Heart right ventricle (tissue), 16 donors: ENCODE measurements at regions of chr1 and their contacts with region 1.

Region 1: DNA sequence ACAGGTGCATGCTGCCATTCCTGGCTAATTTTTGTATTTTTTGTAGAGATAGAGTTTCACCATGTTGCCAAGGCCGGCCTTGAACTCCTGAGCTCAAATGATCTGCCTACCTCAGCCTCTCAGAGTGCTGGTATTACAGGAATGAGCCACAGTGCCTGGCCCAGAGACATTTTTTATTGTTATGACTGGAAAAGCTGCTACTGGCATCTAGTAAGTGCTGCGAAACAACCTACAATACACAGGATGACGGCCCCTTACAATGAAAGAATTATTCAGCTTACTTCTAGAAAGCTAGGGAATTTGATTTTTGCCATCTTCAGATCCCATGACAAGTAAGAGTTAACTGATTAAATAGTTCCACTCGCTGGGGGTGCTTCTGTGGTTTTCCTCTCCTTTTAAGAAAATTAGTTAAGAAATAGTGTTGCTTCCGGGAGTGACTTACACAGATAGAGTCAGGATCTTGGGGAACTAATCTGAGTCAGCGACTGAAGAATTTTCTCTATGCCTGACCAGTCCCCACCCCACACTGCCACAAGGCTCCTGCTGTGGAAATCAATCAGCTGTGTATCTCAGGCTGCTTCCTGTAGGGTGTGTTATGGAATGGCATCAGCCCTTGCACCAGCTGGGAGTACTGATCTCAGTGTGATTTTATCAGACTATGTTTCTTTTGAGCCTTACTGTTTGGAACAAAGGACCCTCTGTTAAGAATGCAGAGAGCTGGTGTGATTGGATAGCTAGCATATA is 93.0 kb upstream of the BMP8A start:
- DNase-seq: peak in 1 of 2 donors; percentile 42
- ATAC-seq: peak in 7 of 8 donors; percentile 66 to 96 (median 78)
- H3K4me3 ChIP-seq: no peak overlapping the region
- H3K27ac ChIP-seq: peak overlapping the region in 9 of 10 donors; percentile 26 to 84 (median 61)
- H3K4me1 ChIP-seq: peaks cover 10 to 79% (median 57%) of the 10 kb centered on the region in 9 donors
- H3K27me3 ChIP-seq: no peaks in the 10 kb centered on the region
- CTCF ChIP-seq: peak in 1 of 9 donors; percentile 9

Region 2: GRCh38 chr1:39196244-39197215 is 201.9 kb before region 1 on chr1:
- intact Hi-C with region 1: loop called in 1 of 10 experiments (anchors 10 kb)
- DNase-seq: peak in 1 of 2 donors; percentile 21
- ATAC-seq: no peak
- H3K4me3 ChIP-seq: no peak overlapping the region
- H3K27ac ChIP-seq: peak overlapping the region in 5 of 10 donors; percentile 30 to 83 (median 44)
- H3K4me1 ChIP-seq: peaks cover 3 to 66% (median 46%) of the 10 kb centered on the region in 9 donors
- H3K27me3 ChIP-seq: no peaks in the 10 kb centered on the region
- CTCF ChIP-seq: no peak